HepG2 (cell line): ENCODE measurements at regions of chr9 and their contacts with region 1.

Region 1: DNA sequence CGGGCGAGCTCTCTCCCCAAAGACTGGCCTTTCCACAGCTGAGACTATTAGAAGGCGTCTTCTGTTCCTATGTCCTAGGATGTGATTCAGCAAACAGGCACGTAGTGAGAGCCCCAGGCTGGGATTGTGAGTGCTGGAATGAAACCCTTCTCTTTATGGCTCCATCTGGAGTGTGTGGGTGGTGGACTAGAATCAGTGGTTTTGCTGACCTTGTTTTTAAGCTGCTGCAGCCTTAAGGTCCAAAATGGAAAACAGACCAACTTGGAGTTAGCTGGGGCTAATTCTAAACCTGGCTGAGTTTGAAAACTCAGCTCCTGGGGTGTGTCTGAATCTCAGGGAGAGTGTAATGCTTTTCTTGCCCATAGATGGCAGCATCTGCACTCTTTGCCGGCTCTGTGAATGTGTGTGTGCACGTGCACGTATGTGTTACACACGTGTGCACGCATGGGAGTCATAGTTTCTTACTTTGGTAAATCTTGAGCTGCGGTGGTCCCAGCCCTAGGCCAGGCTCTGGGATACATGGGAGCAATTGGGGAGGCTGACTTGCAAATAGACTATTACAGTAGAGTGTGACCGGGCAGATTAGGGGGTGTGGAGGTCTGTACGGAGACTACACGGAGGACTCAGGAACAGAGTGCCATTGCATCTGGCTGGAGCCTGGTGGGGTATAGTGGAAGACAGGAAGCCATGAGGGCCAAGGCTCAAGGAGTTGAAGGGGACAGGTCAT is 10.7 kb downstream of the GSN start:
- DNase-seq: no peak
- ATAC-seq: peak; percentile 63
- H3K4me3 ChIP-seq: no peak overlapping the region
- H3K27ac ChIP-seq: no peak overlapping the region
- H3K4me1 ChIP-seq: peaks cover 58% of the 10 kb centered on the region
- H3K27me3 ChIP-seq: no peaks in the 10 kb centered on the region; a peak in 1 of 5 replicates
- CTCF ChIP-seq: peak; percentile 91
- EP300 ChIP-seq: no peak
- POLR2A ChIP-seq: no peak
- RAD21 ChIP-seq: peak; percentile 82

Region 2: DNA sequence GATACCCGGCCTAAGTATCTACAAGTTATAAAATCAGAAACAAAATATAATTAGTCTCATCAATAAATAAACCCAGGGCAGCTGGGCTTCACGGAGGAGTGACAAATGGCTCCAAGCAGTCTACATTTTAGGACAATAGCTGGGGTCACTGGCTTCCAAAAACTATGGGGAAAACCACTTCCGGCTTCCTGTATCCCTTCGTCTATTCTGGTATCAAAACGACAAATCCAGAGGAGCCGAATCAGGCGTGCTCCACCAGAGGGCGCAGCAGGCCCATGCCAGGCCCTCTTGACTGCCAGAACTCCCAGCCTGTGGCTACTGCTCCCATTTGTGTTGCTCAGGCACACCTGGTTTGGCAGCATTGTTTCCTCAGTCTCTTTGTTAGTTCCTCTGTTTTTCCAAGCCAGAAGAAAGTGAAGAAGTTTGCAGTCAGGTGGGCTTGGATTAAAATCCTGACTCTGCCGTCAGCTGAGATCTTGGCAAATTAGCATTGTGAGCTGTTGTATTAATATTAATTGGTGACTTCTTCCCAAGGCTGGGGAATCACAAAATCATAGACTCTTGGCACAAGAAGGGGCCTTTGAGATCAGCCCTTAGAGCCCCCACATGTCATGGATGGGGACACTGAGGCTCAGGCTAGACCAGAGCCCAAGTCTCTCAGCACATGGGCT is 65.4 kb before region 1 on chr9:
- CTCF ChIA-PET with region 1: no interaction called
- POLR2A ChIA-PET with region 1: no interaction called
- in situ Hi-C with region 1: no loop called
- intact Hi-C with region 1: loop called (anchors 5 kb)
- DNase-seq: peak; percentile 77
- ATAC-seq: peak; percentile 96
- H3K4me3 ChIP-seq: peak overlapping the region in 1 of 3 experiments; percentile 18; a peak in 1 of 6 replicates
- H3K27ac ChIP-seq: no peak overlapping the region
- H3K4me1 ChIP-seq: peaks cover 8% of the 10 kb centered on the region
- H3K27me3 ChIP-seq: no peaks in the 10 kb centered on the region
- CTCF ChIP-seq: peak; percentile 96
- EP300 ChIP-seq: no peak
- POLR2A ChIP-seq: no peak
- RAD21 ChIP-seq: peak; percentile 94

Region 3: DNA sequence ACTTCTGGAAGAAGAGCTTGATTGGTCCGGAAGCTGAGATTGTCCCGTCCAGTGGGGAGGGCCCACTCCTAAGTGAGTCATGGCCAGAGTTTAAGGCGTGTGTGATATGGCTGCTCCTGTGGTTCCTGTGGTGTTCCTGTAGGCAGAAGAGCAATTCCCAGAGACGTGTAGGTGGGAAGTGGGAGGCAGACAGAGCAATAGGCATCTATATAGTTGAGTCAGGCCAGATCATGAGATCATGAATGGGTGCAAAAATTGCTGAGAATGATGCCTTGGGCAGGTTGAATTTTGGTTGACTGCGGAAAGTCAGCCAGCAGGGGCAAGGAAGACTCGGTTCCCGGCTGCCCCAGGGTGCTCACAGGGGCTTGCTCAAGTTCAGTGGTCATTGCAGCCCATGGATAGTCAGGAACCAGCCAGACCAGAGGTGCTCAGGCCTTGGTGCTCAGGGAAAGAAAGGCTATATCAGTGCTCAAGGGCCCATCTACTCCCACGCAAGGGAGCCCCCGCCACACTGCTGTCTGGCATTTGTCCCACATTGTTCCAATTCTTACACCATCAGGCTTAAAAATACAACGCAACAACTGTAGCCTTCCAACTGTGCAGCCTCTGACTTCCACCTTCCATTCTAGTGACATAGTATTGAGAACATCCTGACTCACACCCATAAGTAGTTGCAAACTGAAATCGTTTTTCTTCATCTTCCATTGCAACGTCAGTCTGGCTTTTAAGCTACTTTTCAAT is 31.7 kb before region 1 on chr9:
- CTCF ChIA-PET with region 1: no interaction called
- POLR2A ChIA-PET with region 1: no interaction called
- in situ Hi-C with region 1: no loop called
- intact Hi-C with region 1: no loop called
- DNase-seq: no peak
- ATAC-seq: no peak
- H3K4me3 ChIP-seq: no peak overlapping the region
- H3K27ac ChIP-seq: no peak overlapping the region
- H3K4me1 ChIP-seq: no peaks in the 10 kb centered on the region
- H3K27me3 ChIP-seq: peaks cover 0 to 9% of the 10 kb centered on the region in 2 experiments; a peak in 1 of 5 replicates
- CTCF ChIP-seq: no peak
- EP300 ChIP-seq: no peak
- POLR2A ChIP-seq: no peak
- RAD21 ChIP-seq: no peak

Region 4: GRCh38 chr9:121267689-121268597 is 10.8 kb before region 1 on chr9 and contains the start of gene GSN:
- CTCF ChIA-PET with region 1: no interaction called
- POLR2A ChIA-PET with region 1: interaction called, 29 read pairs
- in situ Hi-C with region 1: no loop called
- intact Hi-C with region 1: no loop called
- DNase-seq: peak; percentile 47
- ATAC-seq: peak; percentile 90
- H3K4me3 ChIP-seq: peak within 1 kb of the TSS; percentile 69 to 84 (median 82)
- H3K27ac ChIP-seq: no peak within 1 kb of the TSS
- H3K4me1 ChIP-seq: peaks cover 34% of the 10 kb centered on the region
- H3K27me3 ChIP-seq: peaks cover 0 to 18% of the 10 kb centered on the region in 2 experiments; a peak in 3 of 5 replicates
- CTCF ChIP-seq: 0 out of 2 replicates have a peak, but pooled peaks have one; percentile 16
- EP300 ChIP-seq: no peak
- POLR2A ChIP-seq: peak in 1 of 2 experiments; percentile 64; a peak in 2 of 4 replicates
- RAD21 ChIP-seq: no peak
- total RNA-seq, gene GSN: 126 and 307 TPM in 2 replicates

Region 5: DNA sequence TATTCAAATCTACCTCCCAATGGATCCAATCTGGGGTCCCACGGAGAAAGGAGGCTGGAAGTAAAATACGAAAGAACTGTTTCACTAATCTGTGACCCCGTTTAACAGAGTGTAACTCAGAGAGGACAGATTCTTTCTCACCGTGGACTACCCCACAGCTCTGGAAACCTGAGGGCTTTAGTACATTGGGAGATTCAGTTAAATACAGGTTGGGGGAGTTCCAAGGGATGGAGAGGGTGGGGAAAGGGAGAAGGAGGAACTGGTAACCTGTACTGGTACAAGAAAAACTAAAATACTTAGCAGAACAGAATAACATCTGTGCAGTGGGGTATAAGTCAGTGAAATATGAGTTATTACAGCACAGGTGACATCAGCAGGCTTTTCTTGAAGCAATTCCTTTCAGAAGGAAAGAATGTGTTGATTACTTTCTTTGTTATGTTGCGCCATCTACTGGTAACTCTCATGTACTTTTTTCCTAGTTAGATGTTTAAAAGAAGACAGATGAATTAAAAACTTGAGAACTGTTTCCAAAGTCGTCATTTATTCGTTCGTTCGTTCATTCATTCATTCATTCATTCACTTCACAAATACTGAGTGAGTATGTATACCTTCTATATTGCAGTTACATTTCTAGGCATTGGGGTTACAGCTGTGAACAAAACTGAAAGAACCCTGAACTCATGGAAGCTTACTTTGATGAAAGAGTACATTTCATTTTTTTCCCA is 121.3 kb after region 1 on chr9:
- CTCF ChIA-PET with region 1: interaction called, 3 read pairs
- POLR2A ChIA-PET with region 1: no interaction called
- in situ Hi-C with region 1: no loop called
- intact Hi-C with region 1: loop called (anchors 5 kb)
- DNase-seq: peak; percentile 69
- ATAC-seq: peak; percentile 35
- H3K4me3 ChIP-seq: no peak overlapping the region
- H3K27ac ChIP-seq: no peak overlapping the region
- H3K4me1 ChIP-seq: no peaks in the 10 kb centered on the region
- H3K27me3 ChIP-seq: no peaks in the 10 kb centered on the region; a peak in 1 of 5 replicates
- CTCF ChIP-seq: peak; percentile 74
- EP300 ChIP-seq: no peak
- POLR2A ChIP-seq: no peak
- RAD21 ChIP-seq: peak; percentile 77